Caco-2 (cell line): ENCODE measurements at regions of chr14 and their contacts with region 1.

Region 1: GRCh38 chr14:81453166-81453766 is 53.1 kb upstream of the STON2 start:
- DNase-seq: peak; percentile 52 to 69
- H3K4me3 ChIP-seq: no peak overlapping the region
- H3K4me3 Mint-ChIP-seq: no peak overlapping the region
- H3K27ac Mint-ChIP-seq: no peak overlapping the region
- H3K4me1 ChIP-seq: 0 out of 2 replicates have a peak, but pooled peaks cover 5% of the 10 kb centered on the region
- H3K4me1 Mint-ChIP-seq: no peaks in the 10 kb centered on the region
- H3K27me3 ChIP-seq: no peaks in the 10 kb centered on the region
- H3K27me3 Mint-ChIP-seq: no peaks in the 10 kb centered on the region
- CTCF ChIP-seq: peak; percentile 85 to 88

Region 2: GRCh38 chr14:81303248-81304221 is 149.7 kb before region 1 on chr14:
- CTCF ChIA-PET with region 1: no interaction called
- POLR2A ChIA-PET with region 1: no interaction called
- intact Hi-C with region 1: loop called (anchors 1 kb)
- DNase-seq: peak; percentile 91 to 95
- H3K4me3 ChIP-seq: no peak overlapping the region; the same call in 1 of the 2 replicates
- H3K4me3 Mint-ChIP-seq: peak overlapping the region; percentile 66
- H3K27ac Mint-ChIP-seq: peak overlapping the region; percentile 83
- H3K4me1 ChIP-seq: peaks cover 32% of the 10 kb centered on the region
- H3K4me1 Mint-ChIP-seq: peaks cover 39% of the 10 kb centered on the region
- H3K27me3 ChIP-seq: no peaks in the 10 kb centered on the region
- H3K27me3 Mint-ChIP-seq: no peaks in the 10 kb centered on the region
- CTCF ChIP-seq: no peak

Region 3: DNA sequence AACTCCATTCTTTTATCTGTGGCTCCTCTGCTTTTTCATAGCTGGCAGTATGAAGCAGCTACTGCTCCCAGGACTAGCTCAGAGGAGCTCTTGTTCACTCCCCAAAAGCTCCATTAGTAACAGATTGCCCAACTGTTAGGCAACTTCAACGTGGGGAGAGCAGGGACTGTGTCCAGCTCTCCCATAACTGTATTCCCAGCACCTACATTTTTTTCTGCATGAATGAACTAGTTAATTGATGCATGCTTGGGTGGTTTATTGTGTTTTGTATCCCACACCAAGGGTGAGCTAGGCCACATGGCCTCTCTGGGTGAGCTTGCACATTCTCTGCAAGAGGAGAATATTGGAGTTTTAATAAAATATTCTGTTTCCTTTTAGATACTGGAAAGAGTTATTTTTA is 68.4 kb before region 1 on chr14:
- CTCF ChIA-PET with region 1: no interaction called
- POLR2A ChIA-PET with region 1: no interaction called
- intact Hi-C with region 1: loop called (anchors 5 kb)
- DNase-seq: no peak
- H3K4me3 ChIP-seq: no peak overlapping the region
- H3K4me3 Mint-ChIP-seq: no peak overlapping the region
- H3K27ac Mint-ChIP-seq: no peak overlapping the region
- H3K4me1 ChIP-seq: no peaks in the 10 kb centered on the region
- H3K4me1 Mint-ChIP-seq: no peaks in the 10 kb centered on the region
- H3K27me3 ChIP-seq: no peaks in the 10 kb centered on the region
- H3K27me3 Mint-ChIP-seq: no peaks in the 10 kb centered on the region
- CTCF ChIP-seq: no peak

Region 4: GRCh38 chr14:81474148-81474492 is 20.9 kb after region 1 on chr14:
- CTCF ChIA-PET with region 1: no interaction called
- POLR2A ChIA-PET with region 1: no interaction called
- intact Hi-C with region 1: no loop called
- DNase-seq: no peak
- H3K4me3 ChIP-seq: no peak overlapping the region
- H3K4me3 Mint-ChIP-seq: no peak overlapping the region
- H3K27ac Mint-ChIP-seq: no peak overlapping the region
- H3K4me1 ChIP-seq: no peaks in the 10 kb centered on the region
- H3K4me1 Mint-ChIP-seq: no peaks in the 10 kb centered on the region
- H3K27me3 ChIP-seq: no peaks in the 10 kb centered on the region
- H3K27me3 Mint-ChIP-seq: no peaks in the 10 kb centered on the region
- CTCF ChIP-seq: no peak